Left lung (tissue), 14 donors: ENCODE measurements at regions of chr19 and their contacts with region 1.

Region 1: DNA sequence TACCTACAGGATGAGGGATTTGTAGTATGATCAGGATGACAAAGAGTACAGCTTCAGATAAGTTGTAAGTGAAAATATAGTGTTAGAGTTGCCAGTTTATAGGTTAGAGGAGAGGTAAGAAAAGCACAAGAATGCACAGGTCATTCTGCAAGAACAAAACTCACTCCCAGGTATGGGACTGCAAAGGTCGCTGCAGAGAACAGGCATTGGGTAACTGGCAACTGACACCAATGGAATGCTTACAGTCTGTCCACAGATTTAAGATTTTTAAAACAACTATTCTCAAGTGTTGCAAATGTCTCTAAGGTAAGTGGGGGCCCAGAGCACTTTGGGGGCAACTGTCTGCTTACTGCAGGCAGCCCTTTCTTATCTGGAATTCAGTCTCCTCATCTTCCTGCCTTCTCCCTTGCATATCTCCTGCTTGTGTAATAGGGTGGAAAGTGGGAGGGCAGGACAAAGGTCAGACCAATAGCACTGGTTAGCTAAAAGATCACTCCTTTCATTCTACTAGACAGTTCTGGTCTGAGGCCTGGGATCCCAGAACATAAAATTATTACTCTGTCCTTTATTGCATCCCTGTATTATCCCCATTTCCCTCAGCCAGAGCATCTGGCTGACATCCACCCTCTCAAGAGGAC is 42.3 kb upstream of the ZNF726 start:
- DNase-seq: no peak
- ATAC-seq: no peak
- H3K4me3 ChIP-seq: no peak overlapping the region
- H3K27ac ChIP-seq: no peak overlapping the region
- H3K4me1 ChIP-seq: no peaks in the 10 kb centered on the region
- H3K27me3 ChIP-seq: no peaks in the 10 kb centered on the region
- CTCF ChIP-seq: no peak

Region 2: GRCh38 chr19:23969630-23970029 is 97.2 kb after region 1 on chr19:
- intact Hi-C with region 1: loop called in 1 of 2 experiments (anchors 5 kb)
- DNase-seq: no peak
- ATAC-seq: no peak
- H3K4me3 ChIP-seq: no peak overlapping the region
- H3K27ac ChIP-seq: no peak overlapping the region
- H3K4me1 ChIP-seq: no peaks in the 10 kb centered on the region
- H3K27me3 ChIP-seq: peaks cover 13 to 43% of the 10 kb centered on the region in 2 donors
- CTCF ChIP-seq: no peak